IMR-90 (cell line): ENCODE measurements at regions of chr9 and their contacts with region 1.

Region 1: GRCh38 chr9:113591001-113591898 is 127.7 kb downstream of the RGS3 start:
- DNase-seq: peak; percentile 62
- ATAC-seq: peak; percentile 31
- H3K4me3 ChIP-seq: no peak overlapping the region
- H3K27ac ChIP-seq: no peak overlapping the region
- H3K4me1 ChIP-seq: peaks cover 10% of the 10 kb centered on the region; the same call in 1 of the 2 replicates
- H3K27me3 ChIP-seq: no peaks in the 10 kb centered on the region
- CTCF ChIP-seq: peak; percentile 98
- POLR2A ChIP-seq: peak; percentile 49; the same call in 1 of the 2 replicates
- RAD21 ChIP-seq: peak; percentile 100

Region 2: GRCh38 chr9:113309204-113309813 is 281.9 kb before region 1 on chr9:
- CTCF ChIA-PET with region 1: interaction called, 3 read pairs
- POLR2A ChIA-PET with region 1: no interaction called
- dilution Hi-C with region 1: no loop called
- in situ Hi-C with region 1: no loop called
- intact Hi-C with region 1: loop called (anchors 2 kb)
- DNase-seq: peak; percentile 59
- ATAC-seq: peak; percentile 88
- H3K4me3 ChIP-seq: no peak overlapping the region
- H3K27ac ChIP-seq: no peak overlapping the region
- H3K4me1 ChIP-seq: no peaks in the 10 kb centered on the region
- H3K27me3 ChIP-seq: peaks cover 10% of the 10 kb centered on the region; the same call in 1 of the 2 replicates
- CTCF ChIP-seq: peak; percentile 87
- POLR2A ChIP-seq: no peak
- RAD21 ChIP-seq: peak; percentile 83

Region 3: DNA sequence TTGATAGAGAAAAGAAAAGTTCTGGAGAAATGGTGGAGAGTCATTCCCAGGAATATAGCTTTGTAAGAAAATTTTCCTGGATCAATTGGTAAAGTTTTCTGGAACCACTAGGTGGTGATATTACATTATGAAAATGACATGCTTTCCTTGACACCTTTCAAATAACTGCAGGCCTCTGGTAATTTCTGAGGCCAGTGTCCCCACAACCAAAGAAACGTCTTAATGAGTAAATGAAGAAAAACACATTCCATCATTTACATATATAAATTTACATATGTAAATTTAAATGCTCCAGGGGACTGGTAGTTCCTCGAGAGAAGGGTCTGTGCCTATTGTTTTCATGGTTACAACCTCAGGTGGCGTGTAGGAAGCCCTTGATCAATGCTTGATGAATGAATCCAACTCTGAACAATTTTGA is 144.9 kb before region 1 on chr9:
- CTCF ChIA-PET with region 1: interaction called, 10 read pairs
- POLR2A ChIA-PET with region 1: interaction called, 4 read pairs
- dilution Hi-C with region 1: no loop called
- in situ Hi-C with region 1: no loop called
- intact Hi-C with region 1: loop called (anchors 2 kb)
- DNase-seq: peak; percentile 55
- ATAC-seq: peak; percentile 73
- H3K4me3 ChIP-seq: no peak overlapping the region
- H3K27ac ChIP-seq: no peak overlapping the region
- H3K4me1 ChIP-seq: no peaks in the 10 kb centered on the region
- H3K27me3 ChIP-seq: no peaks in the 10 kb centered on the region
- CTCF ChIP-seq: peak; percentile 73
- POLR2A ChIP-seq: no peak
- RAD21 ChIP-seq: peak; percentile 92

Region 4: GRCh38 chr9:113614843-113615648 is 23.8 kb after region 1 on chr9:
- CTCF ChIA-PET with region 1: no interaction called
- POLR2A ChIA-PET with region 1: interaction called, 10 read pairs
- dilution Hi-C with region 1: no loop called
- in situ Hi-C with region 1: no loop called
- intact Hi-C with region 1: loop called (anchors 2 kb)
- DNase-seq: peak; percentile 74
- ATAC-seq: peak; percentile 76
- H3K4me3 ChIP-seq: no peak overlapping the region
- H3K27ac ChIP-seq: peak overlapping the region; percentile 50
- H3K4me1 ChIP-seq: peaks cover 21% of the 10 kb centered on the region
- H3K27me3 ChIP-seq: no peaks in the 10 kb centered on the region
- CTCF ChIP-seq: no peak
- POLR2A ChIP-seq: no peak
- RAD21 ChIP-seq: no peak

Region 5: DNA sequence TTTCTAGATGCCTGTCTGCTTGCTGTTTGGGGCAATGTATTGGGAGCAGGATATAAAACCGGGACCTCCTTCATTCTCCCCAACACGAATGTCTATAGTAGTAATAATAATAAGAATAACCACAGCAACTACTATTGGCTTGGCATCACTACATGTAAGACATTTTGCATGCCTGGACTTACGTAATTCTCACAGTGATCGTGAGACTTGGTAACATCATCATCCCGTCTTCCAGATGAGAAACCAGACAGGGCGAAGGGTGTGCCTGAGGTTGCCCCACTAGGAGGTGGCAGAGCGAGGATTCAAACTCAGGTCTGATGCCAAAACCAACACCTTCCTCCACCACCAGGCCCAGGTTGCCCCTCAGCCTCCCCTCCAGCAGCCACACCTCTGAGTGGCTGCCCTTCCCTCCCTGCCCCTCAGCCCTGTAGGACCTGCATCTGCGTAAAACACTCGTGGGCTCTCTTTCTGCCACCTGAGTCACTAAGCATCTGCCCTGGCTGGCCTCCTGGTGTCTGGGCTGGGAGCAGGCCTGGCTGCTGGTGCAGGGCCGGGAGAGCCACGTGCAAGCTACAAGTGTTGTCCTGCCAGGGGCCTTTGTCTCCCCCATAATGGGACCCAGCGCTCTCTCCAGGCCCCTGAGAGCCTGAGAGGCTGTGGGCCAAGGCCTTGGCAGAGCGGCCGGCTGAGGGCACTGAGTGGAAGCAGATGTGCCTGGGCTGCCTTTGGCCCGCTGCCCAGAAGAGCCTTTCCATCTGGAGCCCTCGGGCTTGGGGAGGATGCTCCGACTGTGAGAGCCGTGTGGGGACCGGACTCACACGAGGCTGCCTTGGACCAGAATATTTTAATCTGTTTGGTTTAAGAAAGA is 57.6 kb after region 1 on chr9:
- CTCF ChIA-PET with region 1: interaction called, 132 read pairs
- POLR2A ChIA-PET with region 1: interaction called, 10 read pairs
- dilution Hi-C with region 1: no loop called
- in situ Hi-C with region 1: no loop called
- intact Hi-C with region 1: no loop called
- DNase-seq: peak; percentile 57
- ATAC-seq: peak; percentile 53; the same call in 1 of the 2 replicates
- H3K4me3 ChIP-seq: no peak overlapping the region
- H3K27ac ChIP-seq: no peak overlapping the region
- H3K4me1 ChIP-seq: peaks cover 11% of the 10 kb centered on the region
- H3K27me3 ChIP-seq: no peaks in the 10 kb centered on the region
- CTCF ChIP-seq: no peak
- POLR2A ChIP-seq: no peak
- RAD21 ChIP-seq: no peak